Heart left ventricle (tissue), 16 donors: ENCODE measurements at regions of chr6 and their contacts with region 1.

Region 1: DNA sequence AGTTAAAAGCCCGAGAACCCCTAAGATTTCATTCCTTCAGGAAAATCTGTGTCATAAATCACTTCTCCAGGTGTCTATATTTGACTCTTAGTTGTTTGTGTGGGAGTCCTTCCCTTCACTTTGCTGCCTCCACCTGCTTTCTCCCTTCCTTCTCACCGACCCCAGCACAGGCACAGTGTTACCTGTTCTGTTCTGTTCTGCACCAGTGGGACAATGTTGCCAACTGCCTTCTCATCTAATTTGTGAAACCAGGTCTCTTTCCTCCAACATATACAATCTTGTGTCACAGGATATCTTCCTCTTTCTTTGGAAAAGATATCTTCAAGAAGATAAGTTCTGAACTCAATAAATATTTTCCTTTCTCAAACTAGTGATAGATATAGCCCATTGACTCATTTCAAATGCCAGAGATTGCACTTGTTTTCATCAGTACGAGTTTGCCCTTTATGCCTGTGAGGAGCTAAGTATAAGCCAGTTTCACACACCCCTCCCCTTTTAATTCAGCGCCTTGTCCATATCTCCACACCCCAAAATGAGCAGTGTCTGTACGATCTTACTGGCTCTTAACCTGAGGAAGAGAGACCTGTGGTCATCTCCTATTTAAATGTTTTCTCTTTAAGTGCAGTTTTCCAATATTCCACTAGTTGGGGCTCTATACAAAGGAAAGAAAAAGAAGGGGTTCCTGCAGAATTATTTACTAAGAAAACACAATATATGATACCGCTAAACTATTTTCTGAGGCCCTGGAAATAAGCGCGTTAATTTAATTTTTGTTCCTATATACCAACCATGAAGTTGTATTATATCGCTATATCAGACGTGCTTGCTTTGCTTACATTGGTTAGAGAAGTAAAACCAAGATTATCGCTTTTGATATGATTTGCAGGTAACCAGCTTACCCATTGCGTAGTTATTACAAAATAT is 81.6 kb upstream of the PREP start:
- DNase-seq: no peak
- ATAC-seq: peak; percentile 38 to 51 (median 48)
- H3K4me3 ChIP-seq: peak overlapping the region in 5 of 12 donors; percentile 2 to 30 (median 18)
- H3K27ac ChIP-seq: peak overlapping the region in 1 of 12 donors; percentile 6
- H3K4me1 ChIP-seq: peaks cover 0 to 57% (median 13%) of the 10 kb centered on the region in 12 donors
- H3K27me3 ChIP-seq: no peaks in the 10 kb centered on the region
- CTCF ChIP-seq: peak; percentile 83 to 97 (median 93)
- POLR2A ChIP-seq: no peak

Region 2: DNA sequence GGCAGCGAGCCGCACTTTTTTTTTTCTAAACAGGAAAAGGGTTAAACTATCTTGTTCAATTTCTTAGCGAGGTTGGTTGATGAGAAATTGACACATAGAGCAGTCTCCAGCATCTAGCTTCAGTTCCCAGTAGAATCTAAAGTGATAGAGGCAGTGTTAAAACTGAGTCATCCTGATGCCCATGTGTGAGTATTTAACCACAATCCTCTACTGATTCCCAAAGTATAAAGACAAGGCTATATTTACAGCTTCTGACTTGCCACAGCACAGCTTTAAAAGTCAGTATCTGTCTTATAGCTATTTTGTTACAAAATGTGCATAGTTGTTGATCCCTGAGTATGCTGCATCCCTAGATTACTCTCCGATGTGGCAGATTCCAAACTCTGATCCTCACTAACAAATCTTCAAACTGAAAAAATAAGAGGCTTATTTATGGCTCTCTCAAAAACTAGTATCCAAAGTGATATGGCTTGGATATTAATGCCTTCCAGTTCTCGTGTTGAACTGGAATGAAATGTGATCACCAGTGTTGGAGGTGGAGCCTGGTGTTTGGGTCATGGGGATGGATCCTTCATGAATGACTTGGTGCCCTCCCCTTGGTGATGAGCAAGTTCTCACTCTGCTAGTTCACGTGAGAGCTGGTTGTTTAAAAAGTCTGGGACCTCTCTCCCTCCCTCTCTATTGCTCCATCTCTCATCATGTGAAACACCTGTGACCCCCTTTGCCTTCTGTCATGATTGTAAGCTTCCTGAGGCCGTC is 291.6 kb before region 1 on chr6:
- intact Hi-C with region 1: no loop called
- DNase-seq: no peak
- ATAC-seq: no peak
- H3K4me3 ChIP-seq: no peak overlapping the region
- H3K27ac ChIP-seq: no peak overlapping the region
- H3K4me1 ChIP-seq: peaks cover 0 to 5% (median 0%) of the 10 kb centered on the region in 12 donors
- H3K27me3 ChIP-seq: no peaks in the 10 kb centered on the region
- CTCF ChIP-seq: no peak
- POLR2A ChIP-seq: no peak

Region 3: GRCh38 chr6:105601541-105602236 is 117.2 kb after region 1 on chr6:
- intact Hi-C with region 1: loop called in 2 of 10 experiments (anchors 5 kb)
- DNase-seq: peak; percentile 53 to 91 (median 82)
- ATAC-seq: peak; percentile 98 to 99 (median 98)
- H3K4me3 ChIP-seq: peak overlapping the region in 9 of 12 donors; percentile 2 to 26 (median 15)
- H3K27ac ChIP-seq: peak overlapping the region; percentile 31 to 91 (median 78)
- H3K4me1 ChIP-seq: peaks cover 0 to 42% (median 28%) of the 10 kb centered on the region in 12 donors
- H3K27me3 ChIP-seq: no peaks in the 10 kb centered on the region
- CTCF ChIP-seq: no peak
- POLR2A ChIP-seq: peak in 1 of 2 donors; percentile 53

Region 4: DNA sequence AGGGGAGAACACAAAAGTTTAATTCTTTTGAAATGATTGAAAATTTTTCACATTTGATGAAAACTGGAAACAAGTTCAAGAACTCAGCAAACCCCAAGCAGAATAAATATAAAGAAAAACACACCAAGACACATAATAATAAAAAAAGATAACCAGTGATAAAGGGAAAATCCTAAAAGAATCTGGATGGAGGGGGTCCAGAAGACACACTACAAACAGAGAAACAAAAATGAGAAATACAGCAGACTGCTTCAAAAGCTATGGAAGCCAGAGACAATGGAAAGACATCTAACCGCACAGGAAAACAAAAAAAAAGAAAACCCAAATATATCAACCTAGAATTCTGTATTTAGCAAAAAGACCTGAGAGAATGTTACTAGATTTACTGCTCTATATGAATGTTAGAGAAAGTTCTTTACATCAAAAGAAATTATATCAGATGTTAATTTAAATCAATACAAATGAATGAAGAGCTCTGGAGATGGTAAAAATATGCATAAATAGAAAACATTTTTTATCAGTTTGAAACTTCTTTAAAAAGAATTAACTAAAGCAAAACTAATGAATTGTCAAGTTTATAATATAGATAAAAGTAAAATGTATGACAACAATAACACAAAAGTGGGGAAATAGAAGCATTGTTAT is 229.1 kb after region 1 on chr6:
- intact Hi-C with region 1: no loop called
- DNase-seq: no peak
- ATAC-seq: no peak
- H3K4me3 ChIP-seq: no peak overlapping the region
- H3K27ac ChIP-seq: no peak overlapping the region
- H3K4me1 ChIP-seq: no peaks in the 10 kb centered on the region
- H3K27me3 ChIP-seq: no peaks in the 10 kb centered on the region
- CTCF ChIP-seq: no peak
- POLR2A ChIP-seq: no peak

Region 5: GRCh38 chr6:105733565-105734162 is 249.2 kb after region 1 on chr6:
- intact Hi-C with region 1: loop called (anchors 2 to 10 kb)
- DNase-seq: no peak
- ATAC-seq: no peak
- H3K4me3 ChIP-seq: no peak overlapping the region
- H3K27ac ChIP-seq: no peak overlapping the region
- H3K4me1 ChIP-seq: peaks cover 0 to 4% (median 0%) of the 10 kb centered on the region in 12 donors
- H3K27me3 ChIP-seq: no peaks in the 10 kb centered on the region
- CTCF ChIP-seq: peak; percentile 51 to 78 (median 60)
- POLR2A ChIP-seq: no peak

Region 6: DNA sequence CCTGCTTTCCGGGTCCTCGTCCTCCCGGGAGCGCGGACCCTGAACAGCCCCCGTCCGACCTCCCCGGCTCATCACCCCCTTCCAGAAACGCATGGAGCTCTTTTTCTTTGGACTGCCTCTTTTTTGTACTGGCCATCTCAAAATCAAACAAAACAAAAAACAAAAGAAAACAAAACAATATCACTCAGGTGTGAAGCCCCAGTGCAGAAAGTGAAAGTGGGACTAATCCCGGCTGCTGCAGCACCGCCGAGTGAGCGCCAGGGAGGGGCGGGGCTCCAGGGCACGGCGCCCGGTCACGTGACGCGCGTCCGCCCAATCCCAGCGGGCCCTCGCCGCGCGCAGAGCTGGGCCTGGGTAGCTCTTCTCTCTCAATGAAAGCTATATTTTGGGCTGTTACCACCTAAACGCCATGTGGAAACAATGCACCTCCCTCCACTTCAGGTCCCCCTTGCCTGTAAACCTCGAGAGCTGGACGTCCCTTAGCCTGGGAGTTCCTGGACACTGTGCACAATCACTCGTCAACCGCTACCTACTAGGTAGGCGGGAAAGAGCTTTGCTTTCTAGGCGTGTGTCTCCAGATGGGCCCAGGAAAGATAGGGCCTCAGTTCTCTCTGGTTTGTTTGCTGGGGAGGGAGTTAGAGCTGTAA is 507.9 kb after region 1 on chr6:
- intact Hi-C with region 1: loop called in 5 of 10 experiments (anchors 5 to 10 kb)
- DNase-seq: peak; percentile 76 to 92 (median 84)
- ATAC-seq: peak; percentile 83 to 95 (median 95)
- H3K4me3 ChIP-seq: peak overlapping the region; percentile 53 to 78 (median 62)
- H3K27ac ChIP-seq: peak overlapping the region in 6 of 12 donors; percentile 24 to 96 (median 54)
- H3K4me1 ChIP-seq: peaks cover 0 to 37% (median 15%) of the 10 kb centered on the region in 12 donors
- H3K27me3 ChIP-seq: peaks cover 26 to 100% (median 84%) of the 10 kb centered on the region in 9 donors
- CTCF ChIP-seq: no peak
- POLR2A ChIP-seq: peak in 1 of 2 donors; percentile 22

Region 7: DNA sequence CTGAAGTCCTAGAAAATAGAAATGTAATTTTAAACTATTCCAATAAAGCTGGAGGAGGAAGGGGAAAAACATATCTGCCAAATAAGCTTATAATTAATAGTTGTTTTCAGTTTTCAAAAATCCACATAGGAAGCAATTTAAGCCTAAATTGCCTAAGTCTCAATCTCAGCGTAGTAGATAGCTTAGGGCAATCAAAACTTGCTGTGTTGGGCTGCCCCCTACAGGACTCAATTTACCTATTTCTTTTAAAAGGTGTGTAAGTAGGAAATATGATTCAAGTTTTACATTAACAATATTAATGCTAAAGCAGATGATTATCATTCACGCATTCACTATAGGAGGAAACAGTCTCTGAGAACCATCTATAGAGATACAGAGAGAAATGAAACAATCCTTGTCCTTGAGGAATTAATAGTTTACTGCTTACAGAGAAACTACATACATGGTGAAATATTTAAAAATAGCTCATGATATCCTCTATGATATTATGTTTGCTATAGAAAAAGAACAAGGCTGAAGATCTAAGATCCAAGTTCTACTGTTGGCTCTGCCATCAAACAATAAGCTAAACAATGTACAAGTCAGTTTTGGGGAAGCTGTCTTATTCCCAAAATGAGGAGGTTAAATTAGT is 738.9 kb after region 1 on chr6:
- intact Hi-C with region 1: loop called (anchors 2 to 5 kb)
- DNase-seq: peak in 3 of 5 donors; percentile 35 to 60 (median 51)
- ATAC-seq: peak in 3 of 4 donors; percentile 61 to 73 (median 71)
- H3K4me3 ChIP-seq: no peak overlapping the region
- H3K27ac ChIP-seq: no peak overlapping the region
- H3K4me1 ChIP-seq: peaks cover 0 to 7% (median 0%) of the 10 kb centered on the region in 12 donors
- H3K27me3 ChIP-seq: no peaks in the 10 kb centered on the region
- CTCF ChIP-seq: peak; percentile 44 to 75 (median 66)
- POLR2A ChIP-seq: no peak

Region 8: GRCh38 chr6:106325336-106326178 is 841.1 kb after region 1 on chr6 and contains the start of gene ATG5:
- intact Hi-C with region 1: loop called in 1 of 10 experiments (anchors 10 kb)
- DNase-seq: peak; percentile 99 to 100 (median 99)
- ATAC-seq: peak; percentile 97 to 99 (median 98)
- H3K4me3 ChIP-seq: peak within 1 kb of the TSS; percentile 65 to 97 (median 80)
- H3K27ac ChIP-seq: peak within 1 kb of the TSS; percentile 82 to 95 (median 86)
- H3K4me1 ChIP-seq: peaks cover 3 to 19% (median 13%) of the 10 kb centered on the region in 12 donors
- H3K27me3 ChIP-seq: peaks cover 0 to 7% (median 0%) of the 10 kb centered on the region in 9 donors
- CTCF ChIP-seq: no peak
- POLR2A ChIP-seq: peak; percentile 15 to 79
- total RNA-seq, gene ATG5: 12.6 to 23.9 (median 14.3) TPM